ENCODE measurements at regions of chr18 and their contacts with region 1.

Region 1: GRCh38 chr18:12005538-12006487 is 24.5 kb downstream of the IMPA2 start:
- DNase-seq: peak; percentile 40

Region 2: GRCh38 chr18:12060182-12060870 is 54.5 kb after region 1 on chr18:
- intact Hi-C with region 1: loop called in 1 of 2 experiments (anchors 10 kb)
- DNase-seq: no peak

Region 3: GRCh38 chr18:12485479-12486105 is 479.8 kb after region 1 on chr18:
- intact Hi-C with region 1: no loop called
- DNase-seq: no peak

Measured in posterior vena cava (tissue), 2 donors.